ENCODE measurements at regions of chr3 and their contacts with region 1.

Region 1: DNA sequence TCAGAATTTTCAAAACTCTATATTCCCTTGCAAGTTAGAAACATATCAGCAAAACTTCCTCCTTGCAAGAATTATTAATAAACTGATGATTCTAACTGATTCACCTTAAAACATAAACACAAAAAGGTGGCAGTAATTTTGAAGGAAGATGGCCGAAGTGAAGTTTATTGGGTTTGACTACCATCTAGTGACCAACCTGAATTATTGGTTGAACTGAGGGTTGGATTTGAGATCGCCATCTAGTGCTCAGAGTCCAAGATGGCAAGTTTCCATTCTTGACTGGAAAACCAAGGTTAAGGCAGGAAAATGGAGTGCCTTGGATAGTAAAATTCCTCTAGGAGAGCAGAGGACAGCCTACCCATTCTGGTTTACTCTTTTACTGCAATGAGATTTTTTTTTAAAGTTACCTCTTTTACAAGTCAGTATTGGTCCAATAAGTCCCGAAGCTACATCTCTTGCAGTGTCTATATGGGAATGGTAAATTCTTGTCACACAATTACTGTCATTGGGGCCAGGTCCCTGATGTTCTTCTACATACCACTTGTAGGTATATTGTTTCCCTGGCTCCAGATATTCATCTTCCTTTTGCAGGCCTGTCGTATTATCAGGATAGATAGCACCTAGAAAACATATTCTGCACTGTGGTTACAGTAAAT is 51.6 kb upstream of the CP start:
- DNase-seq: peak; percentile 50 to 78 (median 58)
- ATAC-seq: peak; percentile 89
- H3K4me3 ChIP-seq: no peak overlapping the region
- H3K27ac ChIP-seq: no peak overlapping the region
- H3K4me1 ChIP-seq: no peaks in the 10 kb centered on the region
- H3K27me3 ChIP-seq: 0 out of 5 replicates have a peak, but pooled peaks cover 2 to 4% of the 10 kb centered on the region in 2 experiments
- CTCF ChIP-seq: peak; percentile 94 to 100 (median 99)
- EP300 ChIP-seq: 0 out of 2 replicates have a peak, but pooled peaks have one; percentile 19
- POLR2A ChIP-seq: no peak
- RAD21 ChIP-seq: peak; percentile 99 to 100

Region 2: GRCh38 chr3:148861277-148861869 is 411.9 kb before region 1 on chr3:
- CTCF ChIA-PET with region 1: interaction called, 5 read pairs
- POLR2A ChIA-PET with region 1: no interaction called
- in situ Hi-C with region 1: no loop called
- intact Hi-C with region 1: loop called (anchors 5 kb)
- DNase-seq: peak; percentile 31 to 52 (median 50)
- ATAC-seq: peak; percentile 69
- H3K4me3 ChIP-seq: no peak overlapping the region
- H3K27ac ChIP-seq: no peak overlapping the region
- H3K4me1 ChIP-seq: no peaks in the 10 kb centered on the region
- H3K27me3 ChIP-seq: no peaks in the 10 kb centered on the region
- CTCF ChIP-seq: peak in 2 of 3 experiments; percentile 40 to 68; a peak in 4 of 6 replicates
- EP300 ChIP-seq: no peak
- POLR2A ChIP-seq: no peak
- RAD21 ChIP-seq: peak; percentile 65 to 70

Region 3: DNA sequence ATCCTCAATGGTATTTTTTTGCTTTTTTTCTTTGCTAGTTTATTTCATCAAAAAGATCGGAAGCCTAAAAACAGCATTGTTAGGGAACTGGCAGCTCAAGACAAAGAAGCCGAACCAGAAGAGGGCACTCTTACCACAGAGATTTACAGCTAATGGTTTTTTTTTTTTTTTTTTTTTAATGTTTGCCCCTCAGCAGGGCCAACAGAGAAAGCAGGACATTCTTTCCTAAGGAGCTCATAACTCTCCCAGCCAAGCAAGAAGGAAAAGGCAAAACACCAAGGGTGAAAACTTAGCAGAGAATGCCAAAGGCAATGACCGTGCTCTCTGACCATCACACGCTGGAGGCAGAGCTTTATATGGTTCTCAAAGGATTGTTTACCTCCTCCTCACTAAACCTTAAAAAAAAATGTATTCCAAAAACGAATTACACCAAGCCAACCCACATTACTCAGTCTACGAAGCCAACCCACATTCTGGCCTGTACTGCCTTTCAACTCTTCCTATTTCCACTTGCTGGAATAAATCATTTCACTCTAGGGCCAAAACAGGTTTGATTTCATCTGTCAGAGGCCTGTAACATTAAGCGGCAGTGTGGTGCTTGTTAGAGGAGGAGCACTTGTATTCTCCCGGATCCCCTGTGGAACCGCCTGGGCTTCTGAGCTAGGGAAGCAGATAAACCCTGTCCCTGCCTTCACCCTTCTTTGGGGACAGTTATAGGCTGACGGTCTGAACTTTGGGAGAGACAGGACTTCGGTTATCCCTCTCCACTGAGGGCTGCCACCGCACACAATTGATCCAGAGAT is 317.5 kb before region 1 on chr3:
- CTCF ChIA-PET with region 1: interaction called, 27 read pairs
- POLR2A ChIA-PET with region 1: no interaction called
- in situ Hi-C with region 1: loop called (anchors 5 kb)
- intact Hi-C with region 1: loop called (anchors 1 kb)
- DNase-seq: peak in 2 of 4 experiments; percentile 13 to 59
- ATAC-seq: peak; percentile 63
- H3K4me3 ChIP-seq: no peak overlapping the region
- H3K27ac ChIP-seq: no peak overlapping the region
- H3K4me1 ChIP-seq: no peaks in the 10 kb centered on the region
- H3K27me3 ChIP-seq: peaks cover 0 to 3% of the 10 kb centered on the region in 2 experiments; a peak in 1 of 5 replicates
- CTCF ChIP-seq: peak; percentile 61 to 75 (median 61); a peak in 5 of 6 replicates
- EP300 ChIP-seq: no peak
- POLR2A ChIP-seq: no peak
- RAD21 ChIP-seq: peak; percentile 67 to 73

Region 4: GRCh38 chr3:149067883-149068282 is 205.3 kb before region 1 on chr3:
- CTCF ChIA-PET with region 1: no interaction called
- POLR2A ChIA-PET with region 1: no interaction called
- in situ Hi-C with region 1: no loop called
- intact Hi-C with region 1: no loop called
- DNase-seq: no peak
- ATAC-seq: no peak
- H3K4me3 ChIP-seq: no peak overlapping the region
- H3K27ac ChIP-seq: no peak overlapping the region
- H3K4me1 ChIP-seq: no peaks in the 10 kb centered on the region
- H3K27me3 ChIP-seq: no peaks in the 10 kb centered on the region
- CTCF ChIP-seq: no peak
- EP300 ChIP-seq: no peak
- POLR2A ChIP-seq: no peak
- RAD21 ChIP-seq: no peak

Region 5: DNA sequence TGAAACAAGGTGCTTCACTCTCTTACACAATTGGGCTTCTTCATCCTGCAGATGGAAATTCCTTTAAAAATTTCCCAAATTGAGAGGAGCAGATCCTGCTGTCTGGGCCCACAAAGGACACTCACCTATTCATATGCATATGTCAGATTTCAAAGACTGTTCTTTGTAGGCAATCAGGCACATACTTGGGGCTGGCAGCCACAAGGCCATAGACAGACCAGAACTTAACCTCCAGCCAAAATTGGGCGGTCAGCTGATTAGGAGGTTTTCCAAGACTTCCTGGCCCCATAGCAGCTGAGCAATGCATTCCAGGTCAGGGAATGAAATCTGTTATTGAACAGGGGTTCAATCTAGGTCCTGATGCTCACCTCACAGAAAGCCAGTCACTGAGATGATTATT is 158.8 kb before region 1 on chr3:
- CTCF ChIA-PET with region 1: interaction called, 210 read pairs
- POLR2A ChIA-PET with region 1: no interaction called
- in situ Hi-C with region 1: loop called (anchors 5 kb)
- intact Hi-C with region 1: no loop called
- DNase-seq: no peak
- ATAC-seq: no peak
- H3K4me3 ChIP-seq: no peak overlapping the region
- H3K27ac ChIP-seq: no peak overlapping the region
- H3K4me1 ChIP-seq: no peaks in the 10 kb centered on the region; a peak in 1 of 5 replicates
- H3K27me3 ChIP-seq: peaks cover 0 to 4% of the 10 kb centered on the region in 2 experiments; a peak in 1 of 5 replicates
- CTCF ChIP-seq: no peak
- EP300 ChIP-seq: no peak
- POLR2A ChIP-seq: no peak
- RAD21 ChIP-seq: no peak

Region 6: GRCh38 chr3:149120051-149120972 is 152.9 kb before region 1 on chr3:
- CTCF ChIA-PET with region 1: interaction called, 210 read pairs
- POLR2A ChIA-PET with region 1: interaction called, 8 read pairs
- in situ Hi-C with region 1: loop called (anchors 5 kb)
- intact Hi-C with region 1: loop called (anchors 1 kb)
- DNase-seq: peak in 3 of 4 experiments; percentile 12 to 68 (median 52)
- ATAC-seq: peak; percentile 87
- H3K4me3 ChIP-seq: no peak overlapping the region
- H3K27ac ChIP-seq: no peak overlapping the region
- H3K4me1 ChIP-seq: no peaks in the 10 kb centered on the region
- H3K27me3 ChIP-seq: peaks cover 0 to 9% of the 10 kb centered on the region in 2 experiments; a peak in 2 of 5 replicates
- CTCF ChIP-seq: peak; percentile 55 to 85 (median 73)
- EP300 ChIP-seq: no peak
- POLR2A ChIP-seq: no peak
- RAD21 ChIP-seq: peak; percentile 97

Region 7: DNA sequence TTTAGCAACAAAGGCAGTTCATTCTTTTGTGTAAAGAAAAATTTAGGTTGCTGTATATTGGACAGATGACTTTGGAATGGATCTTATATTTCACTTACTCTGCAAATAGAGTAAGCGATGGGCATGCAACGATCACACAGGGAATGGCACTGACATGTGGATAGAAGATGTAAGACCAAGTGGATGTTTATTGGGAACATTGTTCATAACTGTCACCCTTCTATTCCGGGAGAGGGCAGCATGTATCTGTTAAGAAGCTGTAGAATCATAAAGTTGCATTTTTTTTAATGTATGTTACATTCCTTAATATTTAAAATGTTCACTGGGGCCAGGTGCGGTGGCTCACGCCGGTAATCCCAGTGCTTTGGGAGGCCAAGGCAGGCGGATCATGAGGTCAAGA is 102.6 kb before region 1 on chr3:
- CTCF ChIA-PET with region 1: interaction called, 10 read pairs
- POLR2A ChIA-PET with region 1: no interaction called
- in situ Hi-C with region 1: no loop called
- intact Hi-C with region 1: no loop called
- DNase-seq: no peak
- ATAC-seq: no peak
- H3K4me3 ChIP-seq: no peak overlapping the region
- H3K27ac ChIP-seq: no peak overlapping the region
- H3K4me1 ChIP-seq: no peaks in the 10 kb centered on the region
- H3K27me3 ChIP-seq: no peaks in the 10 kb centered on the region
- CTCF ChIP-seq: no peak
- EP300 ChIP-seq: no peak
- POLR2A ChIP-seq: no peak
- RAD21 ChIP-seq: no peak

Measured in K562 (cell line).